B cell (primary cell): ENCODE measurements at regions of chr19 and their contacts with region 1.

Region 1: GRCh38 chr19:2840794-2841790 is at the start of gene ZNF555:
- DNase-seq: peak; percentile 99
- ATAC-seq: peak; percentile 93
- H3K4me3 ChIP-seq: peak within 1 kb of the TSS; percentile 34 to 77 (median 73)
- H3K4me3 Mint-ChIP-seq: peak within 1 kb of the TSS; percentile 95
- H3K27ac ChIP-seq: peak within 1 kb of the TSS; percentile 83 to 86
- H3K27ac Mint-ChIP-seq: peak within 1 kb of the TSS; percentile 95
- H3K4me1 ChIP-seq: peaks cover 12 to 15% of the 10 kb centered on the region in 2 donors
- H3K4me1 Mint-ChIP-seq: peaks cover 26% of the 10 kb centered on the region
- H3K27me3 ChIP-seq: no peaks in the 10 kb centered on the region
- H3K27me3 Mint-ChIP-seq: no peaks in the 10 kb centered on the region
- CTCF ChIP-seq: peak; percentile 74
- total RNA-seq, gene ZNF555: 7.4 and 9.7 TPM in 2 replicates

Region 2: GRCh38 chr19:2820112-2820702 is 20.9 kb before region 1 on chr19:
- CTCF ChIA-PET with region 1: interaction called, 6 read pairs
- POLR2A ChIA-PET with region 1: interaction called, 5 read pairs
- intact Hi-C with region 1: loop called (anchors 1 kb)
- DNase-seq: no peak
- ATAC-seq: no peak
- H3K4me3 ChIP-seq: peak overlapping the region; percentile 19 to 81 (median 60)
- H3K4me3 Mint-ChIP-seq: peak overlapping the region; percentile 85
- H3K27ac ChIP-seq: no peak overlapping the region
- H3K27ac Mint-ChIP-seq: no peak overlapping the region
- H3K4me1 ChIP-seq: peaks cover 4 to 18% of the 10 kb centered on the region in 2 donors
- H3K4me1 Mint-ChIP-seq: peaks cover 9% of the 10 kb centered on the region
- H3K27me3 ChIP-seq: no peaks in the 10 kb centered on the region
- H3K27me3 Mint-ChIP-seq: no peaks in the 10 kb centered on the region
- CTCF ChIP-seq: no peak

Region 3: GRCh38 chr19:2867025-2867991 is 26.2 kb after region 1 on chr19 and contains the start of gene ZNF556:
- CTCF ChIA-PET with region 1: no interaction called
- POLR2A ChIA-PET with region 1: no interaction called
- intact Hi-C with region 1: no loop called
- DNase-seq: no peak
- ATAC-seq: no peak
- H3K4me3 ChIP-seq: no peak within 1 kb of the TSS
- H3K4me3 Mint-ChIP-seq: no peak within 1 kb of the TSS
- H3K27ac ChIP-seq: no peak within 1 kb of the TSS
- H3K27ac Mint-ChIP-seq: no peak within 1 kb of the TSS
- H3K4me1 ChIP-seq: no peaks in the 10 kb centered on the region
- H3K4me1 Mint-ChIP-seq: peaks cover 5% of the 10 kb centered on the region
- H3K27me3 ChIP-seq: no peaks in the 10 kb centered on the region
- H3K27me3 Mint-ChIP-seq: peaks cover 9% of the 10 kb centered on the region
- CTCF ChIP-seq: no peak
- total RNA-seq, gene ZNF556: not detected in 2 replicates

Region 4: DNA sequence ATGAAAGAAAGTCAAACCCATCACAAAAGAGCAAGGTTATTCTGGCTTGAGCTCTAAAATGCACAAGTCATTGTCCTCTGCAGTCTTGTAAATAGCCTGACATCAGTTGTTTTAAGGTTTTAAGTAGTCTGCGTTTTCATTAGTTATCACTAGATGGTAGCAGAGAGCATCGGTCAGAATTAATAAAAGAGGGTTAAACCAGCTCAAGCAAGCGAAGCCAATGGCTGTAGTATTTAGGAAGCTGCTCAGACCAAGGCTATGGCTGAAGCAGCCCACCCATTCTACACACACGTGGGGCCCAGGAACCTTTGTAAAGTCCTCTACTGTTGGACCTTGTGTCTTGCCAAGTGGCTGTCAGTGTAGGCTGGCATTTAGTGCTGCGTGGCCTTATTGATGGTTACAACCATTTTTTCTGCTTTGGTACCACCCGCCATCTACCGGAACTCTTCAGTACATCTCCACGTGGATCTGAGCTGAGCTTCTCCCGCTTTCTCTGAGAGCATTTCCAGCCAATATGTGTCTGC is 46.4 kb after region 1 on chr19:
- CTCF ChIA-PET with region 1: interaction called, 3 read pairs
- POLR2A ChIA-PET with region 1: no interaction called
- intact Hi-C with region 1: loop called (anchors 5 kb)
- DNase-seq: peak; percentile 71
- ATAC-seq: peak; percentile 58
- H3K4me3 ChIP-seq: no peak overlapping the region
- H3K4me3 Mint-ChIP-seq: peak overlapping the region; percentile 27
- H3K27ac ChIP-seq: peak overlapping the region in 1 of 2 donors; percentile 72
- H3K27ac Mint-ChIP-seq: peak overlapping the region; percentile 53
- H3K4me1 ChIP-seq: peaks cover 3 to 16% of the 10 kb centered on the region in 2 donors
- H3K4me1 Mint-ChIP-seq: peaks cover 18% of the 10 kb centered on the region
- H3K27me3 ChIP-seq: no peaks in the 10 kb centered on the region
- H3K27me3 Mint-ChIP-seq: peaks cover 4% of the 10 kb centered on the region
- CTCF ChIP-seq: peak; percentile 80

Region 5: DNA sequence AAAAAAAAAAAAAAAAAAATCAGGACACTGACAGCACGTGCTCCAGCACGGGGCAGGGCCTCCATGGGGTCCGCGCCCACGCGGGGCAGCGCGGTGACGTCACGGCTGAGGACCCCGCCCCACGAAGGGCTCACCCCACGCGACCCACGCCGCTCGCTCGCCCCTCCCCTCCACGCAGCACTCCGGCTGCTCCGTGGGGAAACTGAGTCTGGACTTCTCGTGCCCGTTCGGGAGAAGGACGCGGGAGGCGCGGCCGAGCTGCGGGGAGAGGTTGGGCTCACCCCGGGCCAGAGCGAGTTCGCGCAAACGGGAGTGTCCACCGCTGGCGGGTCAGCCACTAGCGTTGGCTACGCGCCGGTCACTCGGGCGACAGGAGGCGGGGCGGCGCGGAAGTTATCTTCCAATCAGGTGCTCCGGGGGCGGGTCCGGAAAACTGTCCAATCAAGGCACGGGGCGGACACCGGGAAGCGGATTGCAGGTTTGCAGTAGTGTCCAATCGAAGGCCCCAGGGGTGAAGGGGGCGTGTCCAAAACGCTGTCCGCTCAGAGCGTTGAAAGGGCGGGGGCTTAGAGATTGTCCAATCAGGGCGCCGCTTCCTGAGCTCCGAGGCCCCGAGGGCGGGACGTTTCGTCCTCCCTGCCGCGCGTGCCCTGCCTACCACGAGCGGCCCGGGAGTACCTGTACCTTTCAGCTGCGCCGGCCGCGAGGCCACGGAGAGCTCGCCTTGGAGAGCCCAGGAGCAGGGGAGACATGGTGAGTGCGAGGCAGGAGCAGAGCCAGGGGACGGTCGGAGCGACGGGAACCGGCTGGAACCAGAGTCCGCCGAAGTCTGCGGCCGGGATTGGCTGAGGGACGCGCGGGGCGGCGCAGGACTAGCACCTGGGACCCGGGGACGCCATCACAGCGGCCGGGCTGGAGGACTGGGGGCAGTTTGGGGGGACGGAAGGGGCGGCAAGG is 59.5 kb after region 1 on chr19 and contains the start of gene ZNF57:
- CTCF ChIA-PET with region 1: interaction called, 3 read pairs
- POLR2A ChIA-PET with region 1: interaction called, 10 read pairs
- intact Hi-C with region 1: loop called (anchors 1 kb)
- DNase-seq: peak; percentile 98
- ATAC-seq: peak; percentile 99
- H3K4me3 ChIP-seq: peak within 1 kb of the TSS in 4 of 5 experiments; percentile 65 to 86 (median 74)
- H3K4me3 Mint-ChIP-seq: peak within 1 kb of the TSS; percentile 99
- H3K27ac ChIP-seq: peak within 1 kb of the TSS in 1 of 2 donors; percentile 68
- H3K27ac Mint-ChIP-seq: peak within 1 kb of the TSS; percentile 94
- H3K4me1 ChIP-seq: peaks cover 6 to 14% of the 10 kb centered on the region in 2 donors
- H3K4me1 Mint-ChIP-seq: peaks cover 18% of the 10 kb centered on the region
- H3K27me3 ChIP-seq: no peaks in the 10 kb centered on the region
- H3K27me3 Mint-ChIP-seq: no peaks in the 10 kb centered on the region
- CTCF ChIP-seq: no peak
- total RNA-seq, gene ZNF57: 3.4 and 3.8 TPM in 2 replicates

Region 6: GRCh38 chr19:2923510-2923909 is 82.4 kb after region 1 on chr19:
- CTCF ChIA-PET with region 1: no interaction called
- POLR2A ChIA-PET with region 1: no interaction called
- intact Hi-C with region 1: no loop called
- DNase-seq: no peak
- ATAC-seq: no peak
- H3K4me3 ChIP-seq: no peak overlapping the region
- H3K4me3 Mint-ChIP-seq: no peak overlapping the region
- H3K27ac ChIP-seq: no peak overlapping the region
- H3K27ac Mint-ChIP-seq: no peak overlapping the region
- H3K4me1 ChIP-seq: no peaks in the 10 kb centered on the region
- H3K4me1 Mint-ChIP-seq: no peaks in the 10 kb centered on the region
- H3K27me3 ChIP-seq: no peaks in the 10 kb centered on the region
- H3K27me3 Mint-ChIP-seq: no peaks in the 10 kb centered on the region
- CTCF ChIP-seq: no peak